ENCODE measurements at regions of chr1 and their contacts with region 1.

Region 1: GRCh38 chr1:160193091-160193819 is 2.9 kb downstream of the CASQ1 start:
- DNase-seq: peak; percentile 82 to 84 (median 82)
- H3K4me3 ChIP-seq: no peak overlapping the region
- H3K4me3 Mint-ChIP-seq: no peak overlapping the region
- H3K27ac ChIP-seq: no peak overlapping the region
- H3K27ac Mint-ChIP-seq: no peak overlapping the region
- H3K4me1 ChIP-seq: peaks cover 4 to 9% of the 10 kb centered on the region in 2 donors
- H3K4me1 Mint-ChIP-seq: no peaks in the 10 kb centered on the region
- H3K27me3 ChIP-seq: no peaks in the 10 kb centered on the region
- H3K27me3 Mint-ChIP-seq: peaks cover 2 to 3% (median 3%) of the 10 kb centered on the region in 3 donors
- CTCF ChIP-seq: peak; percentile 86

Region 2: GRCh38 chr1:159561497-159561896 is 631.8 kb before region 1 on chr1:
- intact Hi-C with region 1: no loop called
- DNase-seq: no peak
- H3K4me3 ChIP-seq: no peak overlapping the region
- H3K4me3 Mint-ChIP-seq: no peak overlapping the region
- H3K27ac ChIP-seq: no peak overlapping the region
- H3K27ac Mint-ChIP-seq: no peak overlapping the region
- H3K4me1 ChIP-seq: no peaks in the 10 kb centered on the region
- H3K4me1 Mint-ChIP-seq: peaks cover 4% of the 10 kb centered on the region
- H3K27me3 ChIP-seq: no peaks in the 10 kb centered on the region
- H3K27me3 Mint-ChIP-seq: no peaks in the 10 kb centered on the region
- CTCF ChIP-seq: no peak

Region 3: GRCh38 chr1:160093624-160094290 is 99.5 kb before region 1 on chr1:
- intact Hi-C with region 1: no loop called
- DNase-seq: no peak
- H3K4me3 ChIP-seq: no peak overlapping the region
- H3K4me3 Mint-ChIP-seq: no peak overlapping the region
- H3K27ac ChIP-seq: no peak overlapping the region
- H3K27ac Mint-ChIP-seq: peak overlapping the region in 1 of 7 donors; percentile 25
- H3K4me1 ChIP-seq: peaks cover 23 to 26% of the 10 kb centered on the region in 2 donors
- H3K4me1 Mint-ChIP-seq: peaks cover 21% of the 10 kb centered on the region
- H3K27me3 ChIP-seq: no peaks in the 10 kb centered on the region
- H3K27me3 Mint-ChIP-seq: peaks cover 3 to 12% (median 4%) of the 10 kb centered on the region in 3 donors
- CTCF ChIP-seq: no peak

Region 4: GRCh38 chr1:160251687-160252526 is 58.7 kb after region 1 on chr1:
- intact Hi-C with region 1: loop called (anchors 2 kb)
- DNase-seq: peak; percentile 45 to 71 (median 63)
- H3K4me3 ChIP-seq: no peak overlapping the region
- H3K4me3 Mint-ChIP-seq: no peak overlapping the region
- H3K27ac ChIP-seq: peak overlapping the region in 1 of 2 donors; percentile 32
- H3K27ac Mint-ChIP-seq: peak overlapping the region in 3 of 7 donors; percentile 58 to 68 (median 60)
- H3K4me1 ChIP-seq: no peaks in the 10 kb centered on the region
- H3K4me1 Mint-ChIP-seq: peaks cover 2% of the 10 kb centered on the region
- H3K27me3 ChIP-seq: no peaks in the 10 kb centered on the region
- H3K27me3 Mint-ChIP-seq: peaks cover 0 to 3% (median 0%) of the 10 kb centered on the region in 3 donors
- CTCF ChIP-seq: peak; percentile 78

Region 5: DNA sequence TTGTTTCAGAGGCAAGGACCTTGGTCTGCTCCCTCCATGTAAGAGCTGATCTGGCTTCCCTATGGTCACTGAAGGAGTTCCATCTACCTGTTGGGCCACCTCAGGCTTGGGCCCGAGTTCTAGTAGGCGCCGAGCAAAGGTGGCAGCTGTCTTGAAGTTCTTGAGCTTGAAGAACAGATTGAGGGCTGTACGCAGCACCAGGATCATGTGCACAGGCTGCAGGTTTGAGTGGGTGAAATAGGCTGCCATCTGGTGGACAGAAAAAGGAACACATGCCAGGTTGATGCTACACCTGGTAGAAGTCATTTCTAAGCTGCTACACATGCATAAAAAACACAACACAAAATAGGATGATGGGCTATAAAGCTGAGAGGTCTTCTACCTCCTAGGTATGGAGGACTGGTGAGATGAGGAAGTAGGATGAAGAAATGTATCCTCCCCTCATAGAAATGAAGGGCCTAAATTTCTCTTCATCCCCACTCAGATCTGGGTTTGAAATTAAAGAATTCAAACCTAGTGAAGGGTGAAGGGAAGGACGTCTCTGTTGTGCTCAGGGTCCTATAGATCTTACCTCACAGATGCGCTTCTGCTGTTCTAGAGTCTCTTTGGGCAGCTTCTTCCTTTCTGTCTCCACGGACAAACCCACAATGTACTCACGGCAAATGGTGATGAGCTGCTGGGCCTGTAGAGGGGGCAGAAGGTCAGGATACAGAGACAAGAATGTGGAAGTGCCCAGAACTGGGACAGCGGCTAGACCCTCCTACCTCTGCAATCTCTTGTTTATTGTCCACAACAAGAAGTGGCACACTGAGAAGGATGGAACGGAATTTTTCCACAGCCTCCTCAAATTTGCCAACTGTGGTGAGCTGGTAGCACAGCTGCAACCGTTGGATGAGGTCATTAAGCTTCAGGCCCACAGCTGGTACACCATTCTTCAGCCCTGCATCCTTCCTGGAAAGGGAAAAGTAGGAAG is 98.3 kb after region 1 on chr1:
- intact Hi-C with region 1: loop called (anchors 2 to 5 kb)
- DNase-seq: peak; percentile 47 to 58 (median 57)
- H3K4me3 ChIP-seq: no peak overlapping the region
- H3K4me3 Mint-ChIP-seq: no peak overlapping the region
- H3K27ac ChIP-seq: peak overlapping the region in 1 of 2 donors; percentile 50
- H3K27ac Mint-ChIP-seq: peak overlapping the region; percentile 62 to 86 (median 69)
- H3K4me1 ChIP-seq: no peaks in the 10 kb centered on the region
- H3K4me1 Mint-ChIP-seq: peaks cover 3% of the 10 kb centered on the region
- H3K27me3 ChIP-seq: no peaks in the 10 kb centered on the region
- H3K27me3 Mint-ChIP-seq: no peaks in the 10 kb centered on the region
- CTCF ChIP-seq: peak; percentile 91

Region 6: DNA sequence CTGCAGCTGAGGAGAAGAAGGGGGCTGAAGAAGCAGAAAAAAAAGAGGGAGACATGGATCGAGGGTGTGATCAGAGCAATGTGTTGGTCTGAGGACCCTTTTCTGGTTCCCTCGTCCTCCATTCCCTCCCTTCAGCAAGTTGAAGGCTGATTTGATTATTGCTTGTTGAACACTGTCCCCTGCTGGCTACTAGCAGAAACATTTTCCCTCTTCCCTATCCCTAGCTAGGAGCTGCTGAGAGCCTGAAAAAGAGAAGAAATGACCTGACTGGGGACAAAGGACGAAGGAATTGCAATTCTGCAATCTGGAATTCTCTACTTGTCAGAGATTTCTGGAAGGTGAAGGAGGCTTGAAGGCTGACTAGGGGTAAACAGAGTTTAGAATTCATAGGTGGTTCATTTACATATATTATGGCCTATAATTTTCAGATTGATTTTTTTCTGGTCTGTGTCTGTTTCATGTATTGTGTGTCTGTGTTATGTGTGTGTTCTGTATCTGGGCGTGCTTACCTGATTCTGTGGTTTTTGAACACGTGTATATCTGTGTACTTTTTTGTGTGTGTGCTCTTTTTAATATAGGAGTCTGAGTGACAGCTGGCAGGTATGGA is 183.4 kb after region 1 on chr1:
- intact Hi-C with region 1: loop called in 1 of 2 experiments (anchors 5 kb)
- DNase-seq: peak; percentile 45 to 71 (median 64)
- H3K4me3 ChIP-seq: peak overlapping the region in 1 of 3 experiments; percentile 66
- H3K4me3 Mint-ChIP-seq: peak overlapping the region in 1 of 2 donors; percentile 86
- H3K27ac ChIP-seq: peak overlapping the region in 1 of 2 donors; percentile 75
- H3K27ac Mint-ChIP-seq: peak overlapping the region in 2 of 7 donors; percentile 46 to 82
- H3K4me1 ChIP-seq: peaks cover 25 to 35% of the 10 kb centered on the region in 2 donors
- H3K4me1 Mint-ChIP-seq: peaks cover 36% of the 10 kb centered on the region
- H3K27me3 ChIP-seq: no peaks in the 10 kb centered on the region
- H3K27me3 Mint-ChIP-seq: peaks cover 1 to 6% (median 5%) of the 10 kb centered on the region in 3 donors
- CTCF ChIP-seq: peak; percentile 96

Measured in CD14-positive monocyte (primary cell).